ENCODE measurements at regions of chr1 and their contacts with region 1.

Region 1: DNA sequence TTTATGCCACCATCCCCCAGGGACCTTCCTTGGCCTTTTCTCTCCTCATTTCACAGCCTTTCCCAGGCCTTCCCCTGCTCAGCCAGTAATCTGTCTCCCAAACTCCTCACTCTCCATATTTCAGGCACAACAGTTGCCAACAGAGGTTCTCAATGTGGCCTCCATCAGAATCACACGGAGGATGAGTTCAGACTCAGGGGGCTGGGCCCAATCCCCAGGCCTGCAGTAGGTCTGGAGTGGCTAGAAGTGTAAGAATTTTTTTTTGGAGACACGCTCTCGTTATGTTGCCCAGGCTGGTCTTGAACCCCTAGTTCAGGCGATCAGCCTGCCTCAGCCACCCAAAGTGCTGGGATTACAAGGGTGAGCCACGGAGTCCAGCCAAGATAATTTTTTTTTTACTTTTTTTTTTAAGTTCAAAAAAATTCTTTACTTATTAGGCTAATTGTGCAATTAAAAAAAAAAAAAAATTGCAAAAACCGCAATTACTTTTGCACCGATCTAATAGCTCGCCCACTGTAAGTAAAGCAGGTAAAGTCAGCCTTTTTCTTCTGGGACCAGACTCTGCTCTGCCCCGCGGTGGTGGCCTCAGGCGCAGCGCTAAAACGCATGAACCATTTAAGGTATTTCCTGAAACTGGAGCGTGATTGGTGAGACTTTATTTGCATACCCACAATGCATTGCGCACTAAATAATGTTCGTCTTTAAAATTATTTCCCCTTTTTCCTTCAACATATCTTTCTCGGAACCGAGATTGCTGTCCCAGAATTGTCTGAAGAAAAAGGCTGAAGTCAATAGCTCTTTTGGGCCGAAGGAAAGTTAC is 18.7 kb downstream of the KIAA2013 start:
- DNase-seq: peak; percentile 93
- H3K4me3 Mint-ChIP-seq: peak overlapping the region; percentile 81
- H3K27ac Mint-ChIP-seq: peak overlapping the region; percentile 98
- H3K4me1 Mint-ChIP-seq: peaks cover 46% of the 10 kb centered on the region
- H3K27me3 Mint-ChIP-seq: peaks cover 16% of the 10 kb centered on the region

Region 2: DNA sequence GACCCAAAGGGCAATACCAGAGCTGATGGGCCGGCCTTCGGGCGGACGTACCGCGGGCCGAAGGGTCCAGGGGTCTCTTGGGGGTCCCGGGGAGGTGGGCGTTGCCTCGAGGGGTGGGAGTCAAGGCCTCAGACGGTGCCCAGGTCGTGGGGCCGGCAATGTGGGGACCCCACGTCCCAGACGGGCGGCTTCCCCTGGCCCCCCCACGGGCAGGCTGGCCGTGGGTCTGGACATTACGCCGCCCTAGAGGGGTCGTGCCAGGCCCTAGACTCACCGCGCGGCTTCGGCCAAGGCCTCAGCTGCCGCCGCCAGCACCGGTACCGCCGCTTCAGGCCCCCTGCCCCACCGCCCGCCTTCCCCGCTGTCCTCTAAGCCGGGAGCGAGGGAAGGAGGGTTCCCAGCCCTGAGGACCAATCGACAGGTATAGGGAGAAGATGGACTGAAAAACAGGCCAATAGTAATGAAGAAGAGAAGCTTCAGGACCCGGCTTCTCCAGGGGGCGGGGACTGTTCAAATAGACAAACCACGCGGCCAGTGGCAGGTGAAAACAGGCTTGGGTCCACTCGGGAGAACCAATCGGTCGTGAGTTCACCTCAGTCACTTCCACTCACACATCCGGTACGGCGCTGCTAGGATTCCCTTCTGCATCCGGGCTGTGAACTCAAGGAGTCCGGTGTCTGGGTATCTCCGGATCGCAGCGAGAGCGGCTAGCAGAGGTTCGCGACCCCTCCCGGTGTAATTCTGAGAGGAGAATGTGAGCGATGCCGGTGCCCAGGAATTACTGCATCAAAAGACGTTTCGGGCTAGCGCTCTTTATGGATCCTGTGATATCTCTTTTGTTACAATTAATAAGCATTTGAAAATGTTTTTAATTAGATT is 645.1 kb before region 1 on chr1 and contains the start of gene MTOR:
- CTCF ChIA-PET with region 1: no interaction called
- POLR2A ChIA-PET with region 1: interaction called, 13 read pairs
- DNase-seq: peak; percentile 98
- H3K4me3 Mint-ChIP-seq: peak within 1 kb of the TSS; percentile 85
- H3K27ac Mint-ChIP-seq: peak within 1 kb of the TSS; percentile 80
- H3K4me1 Mint-ChIP-seq: peaks cover 25% of the 10 kb centered on the region
- H3K27me3 Mint-ChIP-seq: no peaks in the 10 kb centered on the region
- total RNA-seq, gene MTOR: 32.9 to 36.2 TPM

Region 3: GRCh38 chr1:11838349-11839272 is 68.9 kb before region 1 on chr1:
- CTCF ChIA-PET with region 1: interaction called, 9 read pairs
- POLR2A ChIA-PET with region 1: interaction called, 137 read pairs
- DNase-seq: peak; percentile 79
- H3K4me3 Mint-ChIP-seq: no peak overlapping the region
- H3K27ac Mint-ChIP-seq: no peak overlapping the region
- H3K4me1 Mint-ChIP-seq: peaks cover 1% of the 10 kb centered on the region
- H3K27me3 Mint-ChIP-seq: no peaks in the 10 kb centered on the region

Region 4: DNA sequence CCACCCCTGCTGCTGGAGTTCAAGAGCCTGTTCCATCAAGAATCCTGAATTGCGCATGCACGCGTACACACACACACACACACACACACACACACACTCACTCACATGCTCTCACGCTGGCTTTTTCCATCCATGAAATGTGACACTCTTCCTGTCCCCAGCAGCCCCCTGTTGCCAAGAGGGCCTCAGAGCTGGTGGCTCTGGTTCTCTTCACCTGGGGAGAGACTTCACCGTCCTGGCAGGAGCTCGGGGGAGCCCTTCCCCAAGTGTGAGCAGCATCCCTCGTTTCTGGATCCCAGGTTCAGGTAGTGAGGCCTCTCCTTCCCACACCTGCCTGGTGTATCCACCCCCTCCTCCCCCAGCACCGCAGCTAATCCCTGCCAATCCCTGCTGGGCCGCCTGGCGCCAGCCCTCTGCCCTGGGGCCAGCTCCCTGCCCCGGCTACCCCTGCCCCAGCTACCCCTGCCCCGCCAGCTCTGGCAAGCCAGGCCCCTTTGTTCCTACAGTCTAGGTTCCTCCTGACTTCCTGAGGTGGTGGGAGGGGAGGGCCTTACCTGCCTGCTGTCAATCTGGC is 37.0 kb after region 1 on chr1:
- CTCF ChIA-PET with region 1: no interaction called
- POLR2A ChIA-PET with region 1: interaction called, 121 read pairs
- DNase-seq: no peak
- H3K4me3 Mint-ChIP-seq: no peak overlapping the region
- H3K27ac Mint-ChIP-seq: no peak overlapping the region
- H3K4me1 Mint-ChIP-seq: peaks cover 7% of the 10 kb centered on the region
- H3K27me3 Mint-ChIP-seq: no peaks in the 10 kb centered on the region

Region 5: GRCh38 chr1:12031039-12031980 is 123.8 kb after region 1 on chr1:
- CTCF ChIA-PET with region 1: interaction called, 17 read pairs
- POLR2A ChIA-PET with region 1: interaction called, 79 read pairs
- DNase-seq: peak; percentile 60
- H3K4me3 Mint-ChIP-seq: no peak overlapping the region
- H3K27ac Mint-ChIP-seq: no peak overlapping the region
- H3K4me1 Mint-ChIP-seq: peaks cover 9% of the 10 kb centered on the region
- H3K27me3 Mint-ChIP-seq: no peaks in the 10 kb centered on the region

Region 6: DNA sequence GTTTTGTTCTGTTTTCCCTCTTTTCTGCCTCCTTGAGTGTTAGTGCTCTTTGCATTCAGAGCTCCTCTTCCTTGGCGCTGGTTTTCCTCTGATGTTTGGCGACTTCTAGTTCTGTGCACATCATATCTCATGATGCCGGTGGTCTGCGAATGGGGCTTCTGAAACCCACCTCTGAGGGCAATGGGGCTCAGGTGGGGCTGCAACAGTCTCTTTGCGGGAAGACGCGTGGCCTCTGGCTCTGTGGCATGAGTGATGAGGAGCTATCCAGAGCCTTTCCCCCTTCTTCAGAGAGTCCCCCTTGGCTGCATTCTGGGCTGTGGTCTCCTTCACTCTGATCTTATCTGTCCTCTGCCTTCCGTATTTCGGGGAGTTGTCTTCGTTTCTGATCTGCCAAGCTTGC is 194.6 kb after region 1 on chr1:
- CTCF ChIA-PET with region 1: no interaction called
- POLR2A ChIA-PET with region 1: interaction called, 12 read pairs
- DNase-seq: no peak
- H3K4me3 Mint-ChIP-seq: no peak overlapping the region
- H3K27ac Mint-ChIP-seq: no peak overlapping the region
- H3K4me1 Mint-ChIP-seq: peaks cover 34% of the 10 kb centered on the region
- H3K27me3 Mint-ChIP-seq: no peaks in the 10 kb centered on the region

Region 7: DNA sequence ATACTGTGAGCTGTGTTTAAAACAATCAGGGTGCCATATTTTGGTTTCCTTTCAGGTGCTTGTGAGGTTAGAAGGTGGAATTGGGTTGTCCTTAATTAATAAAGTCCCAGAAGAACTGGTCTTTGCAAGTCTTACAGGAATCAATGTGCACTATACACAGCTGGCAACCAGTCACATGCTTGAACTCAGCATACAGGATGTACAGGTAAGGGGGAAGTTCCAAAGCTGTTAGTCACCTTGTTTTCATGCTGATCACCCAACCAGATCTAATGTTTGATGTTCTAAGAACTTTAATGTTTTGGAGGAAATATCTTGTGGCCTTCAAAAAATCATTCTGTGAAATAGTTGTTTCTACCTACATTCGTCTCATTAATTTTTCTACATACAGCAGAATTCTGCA is 478.6 kb after region 1 on chr1:
- CTCF ChIA-PET with region 1: no interaction called
- POLR2A ChIA-PET with region 1: interaction called, 14 read pairs
- DNase-seq: no peak
- H3K4me3 Mint-ChIP-seq: no peak overlapping the region
- H3K27ac Mint-ChIP-seq: peak overlapping the region; percentile 73
- H3K4me1 Mint-ChIP-seq: peaks cover 52% of the 10 kb centered on the region
- H3K27me3 Mint-ChIP-seq: no peaks in the 10 kb centered on the region

Measured in activated CD4-positive, alpha-beta memory T cell treated with anti-CD3 and anti-CD28 coated beads, Interleukin-2, amount 10 ng/mL, durations not matched to agents 7 days and 5 days (primary cell).